Activated CD4-positive, alpha-beta T cell treated with anti-CD3 and anti-CD28 coated beads for 36 hours (primary cell): ENCODE measurements at regions of chr9 and their contacts with region 1.

Region 1: DNA sequence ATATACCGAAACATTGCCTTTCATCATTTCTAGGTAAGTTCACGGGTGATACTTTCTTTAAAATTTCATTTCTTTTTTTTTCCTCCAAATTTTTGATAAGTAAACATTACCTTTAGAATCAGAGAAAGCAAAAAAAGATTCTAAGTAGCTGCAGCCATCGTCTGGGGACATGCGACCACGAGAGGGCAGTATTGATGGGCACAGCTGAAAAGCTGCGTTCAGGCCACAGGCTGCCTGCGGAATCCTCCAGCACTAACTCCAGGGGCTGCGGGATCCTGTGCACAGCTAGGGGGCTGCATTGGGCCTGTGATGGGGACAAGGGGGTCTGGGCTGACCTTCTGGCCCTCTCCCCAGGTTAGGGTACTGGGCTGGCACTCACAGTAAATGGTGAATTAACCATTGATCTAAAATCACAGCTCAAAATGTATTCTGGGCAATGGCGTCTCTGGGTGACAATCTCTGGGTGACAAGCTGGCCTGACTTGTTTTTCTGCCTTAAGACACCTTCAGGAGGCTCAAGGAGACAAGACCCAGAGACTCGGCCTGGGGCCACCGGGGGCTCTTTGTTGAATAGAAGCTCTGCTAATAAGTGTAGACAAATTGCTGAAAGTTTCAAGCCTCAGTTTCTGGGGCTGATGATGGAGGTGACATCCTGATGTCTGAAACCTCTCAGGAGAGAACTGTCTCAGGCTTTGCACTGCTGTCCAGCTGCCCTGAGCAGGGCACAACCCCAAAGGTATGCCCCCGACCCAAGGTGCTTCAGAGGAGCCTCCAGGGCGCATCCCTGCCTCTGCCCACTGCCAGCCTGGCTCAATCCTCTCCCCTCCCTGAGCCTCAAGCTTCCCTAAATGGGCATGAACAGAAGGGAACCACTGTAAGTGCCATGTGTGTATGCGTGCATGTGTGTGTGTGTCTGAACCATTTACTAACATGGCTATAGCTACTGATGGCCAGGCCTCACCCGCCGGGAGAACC is 44.3 kb upstream of the SARDH start:
- DNase-seq: peak; percentile 85
- ATAC-seq: peak; percentile 63
- H3K4me3 Mint-ChIP-seq: no peak overlapping the region
- H3K27ac Mint-ChIP-seq: no peak overlapping the region
- H3K4me1 Mint-ChIP-seq: no peaks in the 10 kb centered on the region
- H3K27me3 Mint-ChIP-seq: no peaks in the 10 kb centered on the region

Region 2: GRCh38 chr9:133792721-133793470 is 10.5 kb after region 1 on chr9:
- CTCF ChIA-PET with region 1: interaction called, 11 read pairs
- POLR2A ChIA-PET with region 1: no interaction called
- intact Hi-C with region 1: no loop called
- DNase-seq: peak; percentile 70
- ATAC-seq: peak; percentile 75
- H3K4me3 Mint-ChIP-seq: no peak overlapping the region
- H3K27ac Mint-ChIP-seq: no peak overlapping the region
- H3K4me1 Mint-ChIP-seq: peaks cover 3% of the 10 kb centered on the region
- H3K27me3 Mint-ChIP-seq: peaks cover 1% of the 10 kb centered on the region

Region 3: GRCh38 chr9:134099123-134099787 is 316.8 kb after region 1 on chr9:
- CTCF ChIA-PET with region 1: interaction called, 4 read pairs
- POLR2A ChIA-PET with region 1: no interaction called
- intact Hi-C with region 1: loop called (anchors 1 to 2 kb)
- DNase-seq: peak; percentile 75
- ATAC-seq: peak; percentile 86
- H3K4me3 Mint-ChIP-seq: no peak overlapping the region
- H3K27ac Mint-ChIP-seq: no peak overlapping the region
- H3K4me1 Mint-ChIP-seq: no peaks in the 10 kb centered on the region
- H3K27me3 Mint-ChIP-seq: peaks cover 17% of the 10 kb centered on the region